H1 (cell line): ENCODE measurements at regions of chr2 and their contacts with region 1.

Region 1: GRCh38 chr2:148926291-148926961 is 51.4 kb downstream of the KIF5C start:
- DNase-seq: peak; percentile 17 to 65
- H3K4me3 ChIP-seq: no peak overlapping the region
- H3K27ac ChIP-seq: no peak overlapping the region
- H3K4me1 ChIP-seq: peaks cover 4 to 16% (median 14%) of the 10 kb centered on the region in 4 experiments
- H3K27me3 ChIP-seq: no peaks in the 10 kb centered on the region
- CTCF ChIP-seq: peak; percentile 64 to 81 (median 77)
- EP300 ChIP-seq: no peak
- POLR2A ChIP-seq: no peak
- RAD21 ChIP-seq: peak; percentile 53 to 72

Region 2: GRCh38 chr2:148906124-148906523 is 20.3 kb before region 1 on chr2:
- CTCF ChIA-PET with region 1: interaction called, 16 read pairs
- POLR2A ChIA-PET with region 1: no interaction called
- DNase-seq: no peak
- H3K4me3 ChIP-seq: no peak overlapping the region
- H3K27ac ChIP-seq: no peak overlapping the region
- H3K4me1 ChIP-seq: peaks cover 0 to 7% (median 1%) of the 10 kb centered on the region in 4 experiments; a peak in 2 of 7 replicates
- H3K27me3 ChIP-seq: no peaks in the 10 kb centered on the region
- CTCF ChIP-seq: no peak
- EP300 ChIP-seq: no peak
- POLR2A ChIP-seq: no peak
- RAD21 ChIP-seq: no peak

Region 3: DNA sequence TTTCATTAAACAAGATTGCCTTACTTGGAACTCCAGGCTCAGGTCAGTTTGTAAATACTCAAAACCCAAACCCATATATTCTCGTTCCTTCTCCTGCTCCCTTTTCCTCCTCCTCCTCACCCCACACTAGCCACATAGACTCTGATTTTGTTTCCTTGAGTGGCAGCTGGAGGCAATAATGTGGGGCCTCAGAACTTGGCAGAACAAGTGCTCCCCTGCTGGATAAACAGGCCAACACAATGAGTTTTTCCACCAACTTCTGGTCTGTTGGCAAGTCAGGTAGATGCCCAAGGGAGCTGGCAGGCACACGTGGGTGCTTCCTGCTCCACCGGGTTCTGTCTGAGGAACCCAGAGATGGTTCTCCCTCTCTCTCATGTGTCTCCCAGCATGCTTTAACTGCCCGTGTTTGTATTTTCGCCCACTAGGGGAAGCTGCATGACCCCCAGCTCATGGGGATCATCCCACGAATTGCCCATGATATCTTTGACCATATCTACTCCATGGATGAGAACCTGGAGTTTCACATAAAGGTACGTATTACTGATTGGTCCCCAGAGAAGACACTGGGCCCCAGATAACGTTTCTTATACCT is 10.5 kb after region 1 on chr2:
- CTCF ChIA-PET with region 1: interaction called, 22 read pairs
- POLR2A ChIA-PET with region 1: no interaction called
- DNase-seq: no peak
- H3K4me3 ChIP-seq: no peak overlapping the region
- H3K27ac ChIP-seq: no peak overlapping the region
- H3K4me1 ChIP-seq: no peaks in the 10 kb centered on the region
- H3K27me3 ChIP-seq: no peaks in the 10 kb centered on the region; a peak in 1 of 7 replicates
- CTCF ChIP-seq: peak; percentile 9 to 29 (median 14); a peak in 2 of 4 replicates
- EP300 ChIP-seq: no peak
- POLR2A ChIP-seq: no peak
- RAD21 ChIP-seq: peak; percentile 34 to 45; a peak in 3 of 4 replicates

Region 4: GRCh38 chr2:148978026-148978685 is 51.7 kb after region 1 on chr2:
- CTCF ChIA-PET with region 1: interaction called, 13 read pairs
- POLR2A ChIA-PET with region 1: no interaction called
- DNase-seq: no peak
- H3K4me3 ChIP-seq: no peak overlapping the region
- H3K27ac ChIP-seq: no peak overlapping the region
- H3K4me1 ChIP-seq: peaks cover 5 to 18% (median 12%) of the 10 kb centered on the region in 4 experiments; a peak in 5 of 7 replicates
- H3K27me3 ChIP-seq: no peaks in the 10 kb centered on the region
- CTCF ChIP-seq: peak; percentile 44 to 55 (median 47)
- EP300 ChIP-seq: no peak
- POLR2A ChIP-seq: no peak
- RAD21 ChIP-seq: peak; percentile 58 to 66

Region 5: GRCh38 chr2:149050188-149050587 is 123.8 kb after region 1 on chr2:
- CTCF ChIA-PET with region 1: no interaction called
- POLR2A ChIA-PET with region 1: no interaction called
- DNase-seq: no peak
- H3K4me3 ChIP-seq: no peak overlapping the region
- H3K27ac ChIP-seq: no peak overlapping the region
- H3K4me1 ChIP-seq: no peaks in the 10 kb centered on the region
- H3K27me3 ChIP-seq: no peaks in the 10 kb centered on the region
- CTCF ChIP-seq: no peak
- EP300 ChIP-seq: no peak
- POLR2A ChIP-seq: no peak
- RAD21 ChIP-seq: no peak